ENCODE measurements at regions of chr19 and their contacts with region 1.

Region 1: GRCh38 chr19:54325194-54325621 is 12.2 kb upstream of the LILRA5 start:
- DNase-seq: peak in 29 of 35 experiments; percentile 7 to 81 (median 38)
- ATAC-seq: peak; percentile 70 to 84 (median 78)
- H3K4me3 ChIP-seq: no peak overlapping the region
- H3K4me3 Mint-ChIP-seq: no peak overlapping the region
- H3K27ac ChIP-seq: no peak overlapping the region
- H3K27ac Mint-ChIP-seq: peak overlapping the region in 1 of 2 donors; percentile 27
- H3K4me1 ChIP-seq: peaks cover 0 to 10% of the 10 kb centered on the region in 2 experiments
- H3K4me1 Mint-ChIP-seq: peaks cover 14 to 24% (median 22%) of the 10 kb centered on the region in 3 donors
- H3K27me3 ChIP-seq: peaks cover 0 to 5% of the 10 kb centered on the region in 2 experiments
- H3K27me3 Mint-ChIP-seq: peaks cover 11% of the 10 kb centered on the region in 2 donors

Region 2: DNA sequence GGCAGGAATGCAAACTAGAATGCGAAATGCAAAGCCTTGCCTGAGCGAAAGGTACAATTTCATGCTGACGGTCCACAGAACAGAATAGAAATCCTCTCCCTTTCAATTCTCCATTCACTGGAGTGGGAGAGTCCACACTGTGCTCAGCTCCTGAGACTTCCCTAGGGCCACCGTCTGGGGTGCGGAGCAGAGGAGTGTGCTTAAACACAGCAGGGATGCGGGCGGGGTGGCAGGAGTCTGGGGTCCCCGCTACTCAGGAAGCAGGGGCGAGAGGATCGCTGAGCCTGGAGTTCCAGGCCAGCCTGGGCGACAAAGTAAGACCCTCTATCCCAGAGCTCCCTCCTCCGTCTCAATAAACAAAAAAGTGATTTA is 1362.0 kb before region 1 on chr19:
- CTCF ChIA-PET with region 1: no interaction called
- POLR2A ChIA-PET with region 1: no interaction called
- DNase-seq: peak in 1 of 35 experiments; percentile 4
- ATAC-seq: peak; percentile 8 to 17 (median 10)
- H3K4me3 ChIP-seq: peak overlapping the region; percentile 77 to 94
- H3K4me3 Mint-ChIP-seq: peak overlapping the region; percentile 93 to 95 (median 93)
- H3K27ac ChIP-seq: peak overlapping the region; percentile 56
- H3K27ac Mint-ChIP-seq: peak overlapping the region; percentile 93 to 95
- H3K4me1 ChIP-seq: peaks cover 6 to 17% of the 10 kb centered on the region in 2 experiments
- H3K4me1 Mint-ChIP-seq: peaks cover 21 to 34% (median 32%) of the 10 kb centered on the region in 3 donors
- H3K27me3 ChIP-seq: no peaks in the 10 kb centered on the region
- H3K27me3 Mint-ChIP-seq: no peaks in the 10 kb centered on the region

Region 3: GRCh38 chr19:54390942-54391577 is 65.9 kb after region 1 on chr19:
- CTCF ChIA-PET with region 1: interaction called, 5 to 10 read pairs
- POLR2A ChIA-PET with region 1: no interaction called
- DNase-seq: peak; percentile 13 to 89 (median 56)
- ATAC-seq: peak in 1 of 4 experiments; percentile 24
- H3K4me3 ChIP-seq: no peak overlapping the region
- H3K4me3 Mint-ChIP-seq: peak overlapping the region in 1 of 3 donors; percentile 62
- H3K27ac ChIP-seq: no peak overlapping the region
- H3K27ac Mint-ChIP-seq: peak overlapping the region; percentile 73 to 82
- H3K4me1 ChIP-seq: peaks cover 24 to 32% of the 10 kb centered on the region in 2 experiments
- H3K4me1 Mint-ChIP-seq: peaks cover 39 to 45% (median 40%) of the 10 kb centered on the region in 3 donors
- H3K27me3 ChIP-seq: peaks cover 0 to 25% of the 10 kb centered on the region in 2 experiments
- H3K27me3 Mint-ChIP-seq: peaks cover 2 to 3% of the 10 kb centered on the region in 2 donors

Region 4: GRCh38 chr19:54418030-54418929 is 93.1 kb after region 1 on chr19:
- CTCF ChIA-PET with region 1: no interaction called
- POLR2A ChIA-PET with region 1: no interaction called
- DNase-seq: peak in 4 of 35 experiments; percentile 6 to 21 (median 18)
- ATAC-seq: peak; percentile 38 to 67 (median 62)
- H3K4me3 ChIP-seq: no peak overlapping the region
- H3K4me3 Mint-ChIP-seq: peak overlapping the region in 2 of 3 donors; percentile 55 to 62
- H3K27ac ChIP-seq: no peak overlapping the region
- H3K27ac Mint-ChIP-seq: no peak overlapping the region
- H3K4me1 ChIP-seq: peaks cover 4 to 16% of the 10 kb centered on the region in 2 experiments
- H3K4me1 Mint-ChIP-seq: peaks cover 16 to 18% (median 18%) of the 10 kb centered on the region in 3 donors
- H3K27me3 ChIP-seq: peaks cover 9 to 78% of the 10 kb centered on the region in 2 experiments
- H3K27me3 Mint-ChIP-seq: peaks cover 32 to 54% of the 10 kb centered on the region in 2 donors

Region 5: DNA sequence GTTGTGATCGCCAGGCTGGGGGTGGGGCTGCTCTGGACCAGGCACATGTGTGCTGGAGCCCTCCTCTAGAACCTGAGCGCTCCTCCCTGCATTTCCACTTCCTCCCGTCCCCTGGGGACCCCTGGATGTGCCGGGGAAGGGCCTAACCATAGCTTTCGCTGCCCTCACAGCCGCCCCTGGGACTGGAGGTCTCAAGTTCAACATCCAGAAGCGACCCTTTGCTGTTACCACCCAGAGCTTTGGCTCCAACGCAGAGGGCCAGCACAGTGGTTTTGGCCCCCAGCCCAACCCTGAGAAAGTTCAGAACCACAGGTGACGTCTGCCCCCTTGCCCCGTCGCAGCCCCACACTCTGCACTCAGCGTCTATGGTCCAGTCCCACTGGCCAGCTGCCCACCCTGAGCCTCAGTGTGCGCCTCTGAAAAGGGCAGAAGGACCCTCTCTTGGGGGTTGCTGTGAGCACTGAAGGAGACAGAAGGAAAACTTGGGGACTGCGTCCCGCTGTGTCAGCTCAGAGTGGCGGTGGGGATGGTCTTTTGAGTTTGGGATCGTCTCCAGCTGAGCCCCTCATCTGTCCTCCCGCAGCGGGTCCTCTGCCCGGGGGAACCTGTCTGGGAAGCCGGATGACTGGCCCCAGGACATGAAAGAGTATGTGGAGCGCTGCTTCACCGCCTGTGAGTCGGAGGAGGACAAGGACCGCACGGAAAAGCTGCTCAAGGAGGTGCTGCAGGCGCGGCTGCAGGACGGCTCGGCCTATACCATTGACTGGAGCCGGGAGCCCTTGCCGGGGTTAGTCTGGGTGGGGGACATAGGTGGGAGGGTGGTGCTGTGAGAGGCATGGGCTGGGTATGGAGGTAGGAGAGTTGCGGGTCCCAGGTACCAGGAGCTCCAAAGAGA is 129.8 kb after region 1 on chr19:
- CTCF ChIA-PET with region 1: no interaction called
- POLR2A ChIA-PET with region 1: interaction called in 1 of 2 experiments, 11 read pairs
- DNase-seq: no peak
- ATAC-seq: no peak
- H3K4me3 ChIP-seq: no peak overlapping the region
- H3K4me3 Mint-ChIP-seq: no peak overlapping the region
- H3K27ac ChIP-seq: no peak overlapping the region
- H3K27ac Mint-ChIP-seq: no peak overlapping the region
- H3K4me1 ChIP-seq: peaks cover 2 to 64% of the 10 kb centered on the region in 2 experiments
- H3K4me1 Mint-ChIP-seq: peaks cover 47 to 53% (median 47%) of the 10 kb centered on the region in 3 donors
- H3K27me3 ChIP-seq: no peaks in the 10 kb centered on the region
- H3K27me3 Mint-ChIP-seq: no peaks in the 10 kb centered on the region